ENCODE measurements at regions of chr11 and their contacts with region 1.

Region 1: GRCh38 chr11:83249972-83250593 is 36.1 kb downstream of the CCDC90B start:
- DNase-seq: peak; percentile 36
- CTCF ChIP-seq: peak; percentile 68

Region 2: GRCh38 chr11:82867495-82868082 is 382.5 kb before region 1 on chr11:
- CTCF ChIA-PET with region 1: interaction called, 24 read pairs
- POLR2A ChIA-PET with region 1: no interaction called
- DNase-seq: peak; percentile 63
- CTCF ChIP-seq: peak; percentile 48

Region 3: GRCh38 chr11:82906931-82907330 is 343.2 kb before region 1 on chr11:
- CTCF ChIA-PET with region 1: interaction called, 18 read pairs
- POLR2A ChIA-PET with region 1: no interaction called
- DNase-seq: no peak
- CTCF ChIP-seq: no peak

Region 4: GRCh38 chr11:83235825-83236224 is 14.3 kb before region 1 on chr11:
- CTCF ChIA-PET with region 1: interaction called, 32 read pairs
- POLR2A ChIA-PET with region 1: no interaction called
- DNase-seq: no peak
- CTCF ChIP-seq: no peak

Region 5: DNA sequence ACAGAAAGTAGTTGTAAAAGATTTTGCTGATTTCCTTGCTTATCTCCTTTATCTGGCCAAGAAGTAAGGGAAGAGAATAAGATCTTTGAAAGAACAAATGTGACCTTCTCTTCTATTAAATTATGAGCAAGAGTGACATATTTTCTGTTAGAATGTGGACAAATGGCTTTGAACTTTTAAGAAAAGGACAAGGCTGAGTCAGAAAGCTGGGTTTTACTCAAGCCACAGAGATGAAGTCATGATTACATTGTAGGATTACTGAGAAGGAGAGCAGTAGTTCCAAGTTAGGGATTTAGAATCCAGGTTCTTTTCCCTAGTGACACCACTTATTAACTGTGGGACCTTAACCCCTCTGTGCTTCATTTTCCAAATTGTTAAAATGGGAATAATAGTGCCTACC is 22.5 kb after region 1 on chr11:
- CTCF ChIA-PET with region 1: interaction called, 13 read pairs
- POLR2A ChIA-PET with region 1: no interaction called
- DNase-seq: no peak
- CTCF ChIP-seq: no peak